MCF 10A (cell line): ENCODE measurements at regions of chr4 and their contacts with region 1.

Region 1: GRCh38 chr4:53702334-53703266 is 111.3 kb upstream of the LNX1 start:
- DNase-seq: peak; percentile 92
- H3K4me3 Mint-ChIP-seq: peak overlapping the region; percentile 56
- H3K27ac Mint-ChIP-seq: peak overlapping the region; percentile 80
- H3K4me1 Mint-ChIP-seq: peaks cover 18% of the 10 kb centered on the region
- H3K27me3 Mint-ChIP-seq: no peaks in the 10 kb centered on the region
- CTCF ChIP-seq: no peak

Region 2: DNA sequence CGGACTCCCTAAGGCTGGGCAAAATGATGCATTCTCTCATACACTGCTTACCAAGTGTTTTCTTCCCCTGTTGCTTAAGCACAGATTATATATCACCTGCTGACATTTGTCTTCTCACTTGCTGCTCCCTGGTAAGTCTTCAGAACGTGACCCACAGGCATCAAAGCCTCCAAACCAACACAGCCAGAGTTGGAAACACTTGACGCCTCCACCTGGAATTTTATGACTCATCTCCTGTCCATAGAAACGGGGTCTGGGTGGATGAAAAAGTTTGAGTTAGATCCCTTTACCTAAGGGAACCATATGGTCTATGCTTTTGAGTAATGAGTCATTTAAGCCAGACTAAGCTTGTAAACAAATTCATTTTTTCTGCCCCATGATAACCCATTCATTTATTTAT is 1295.1 kb before region 1 on chr4:
- CTCF ChIA-PET with region 1: no interaction called
- POLR2A ChIA-PET with region 1: no interaction called
- intact Hi-C with region 1: no loop called
- DNase-seq: peak; percentile 77
- H3K4me3 Mint-ChIP-seq: no peak overlapping the region
- H3K27ac Mint-ChIP-seq: no peak overlapping the region
- H3K4me1 Mint-ChIP-seq: no peaks in the 10 kb centered on the region
- H3K27me3 Mint-ChIP-seq: no peaks in the 10 kb centered on the region
- CTCF ChIP-seq: no peak

Region 3: DNA sequence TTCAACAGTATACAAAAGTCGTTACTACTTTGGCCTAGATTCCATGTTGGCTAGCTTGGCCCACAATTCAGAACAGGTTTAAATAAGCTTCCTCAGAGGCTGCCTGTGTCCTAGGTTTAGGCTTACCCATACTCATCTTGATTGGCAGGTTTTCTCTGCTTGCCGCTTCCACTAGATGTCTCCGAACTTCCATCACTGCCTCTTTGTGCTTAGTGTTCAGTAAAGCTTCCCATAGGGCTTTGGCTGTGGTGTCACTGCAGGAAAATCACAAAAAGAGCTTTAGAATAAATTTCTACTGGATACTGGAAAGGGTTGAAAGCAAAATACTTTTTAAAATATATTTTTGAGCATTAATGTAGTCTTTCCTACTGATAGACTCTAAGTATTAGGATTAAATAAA is 389.1 kb before region 1 on chr4:
- CTCF ChIA-PET with region 1: no interaction called
- POLR2A ChIA-PET with region 1: no interaction called
- intact Hi-C with region 1: loop called (anchors 2 kb)
- DNase-seq: peak; percentile 43
- H3K4me3 Mint-ChIP-seq: no peak overlapping the region
- H3K27ac Mint-ChIP-seq: no peak overlapping the region
- H3K4me1 Mint-ChIP-seq: peaks cover under 1% of the 10 kb centered on the region
- H3K27me3 Mint-ChIP-seq: no peaks in the 10 kb centered on the region
- CTCF ChIP-seq: no peak

Region 4: DNA sequence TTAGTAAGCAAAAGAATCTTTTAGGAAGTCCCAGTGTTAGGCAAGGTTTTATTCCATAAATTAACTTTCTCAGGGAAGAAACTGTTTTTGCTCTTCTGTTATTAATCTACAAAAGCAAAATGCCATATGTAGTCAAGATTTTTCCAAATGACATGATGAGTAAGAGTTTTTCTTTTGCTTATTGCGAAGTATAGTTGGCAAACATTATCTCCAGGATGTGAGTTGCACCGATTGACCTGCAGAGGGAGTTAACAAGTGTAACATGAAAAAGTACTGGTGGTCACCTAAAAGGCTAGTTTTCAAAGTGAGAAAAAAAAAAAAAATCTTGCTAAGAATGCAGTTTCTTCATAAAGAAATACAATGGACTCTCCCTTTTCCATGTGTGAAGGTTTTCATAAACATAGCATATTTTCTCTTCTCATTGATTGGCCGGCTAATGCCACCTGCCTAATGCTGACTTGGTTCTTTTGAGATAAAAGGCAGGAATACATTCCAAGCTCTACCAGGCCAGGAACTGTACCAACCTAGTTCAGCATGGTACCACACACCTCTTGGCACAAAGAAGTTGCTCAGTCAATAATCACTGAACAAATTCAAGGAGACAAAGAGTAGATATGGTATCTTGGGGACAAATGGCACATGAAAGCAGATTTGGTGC is 211.5 kb before region 1 on chr4:
- CTCF ChIA-PET with region 1: no interaction called
- POLR2A ChIA-PET with region 1: interaction called, 3 read pairs
- intact Hi-C with region 1: loop called (anchors 2 kb)
- DNase-seq: peak; percentile 85
- H3K4me3 Mint-ChIP-seq: no peak overlapping the region
- H3K27ac Mint-ChIP-seq: peak overlapping the region; percentile 83
- H3K4me1 Mint-ChIP-seq: no peaks in the 10 kb centered on the region
- H3K27me3 Mint-ChIP-seq: no peaks in the 10 kb centered on the region
- CTCF ChIP-seq: peak; percentile 39

Region 5: GRCh38 chr4:53717064-53717549 is 14.5 kb after region 1 on chr4:
- CTCF ChIA-PET with region 1: interaction called, 11 read pairs
- POLR2A ChIA-PET with region 1: no interaction called
- intact Hi-C with region 1: no loop called
- DNase-seq: no peak
- H3K4me3 Mint-ChIP-seq: no peak overlapping the region
- H3K27ac Mint-ChIP-seq: no peak overlapping the region
- H3K4me1 Mint-ChIP-seq: peaks cover 5% of the 10 kb centered on the region
- H3K27me3 Mint-ChIP-seq: no peaks in the 10 kb centered on the region
- CTCF ChIP-seq: no peak

Region 6: DNA sequence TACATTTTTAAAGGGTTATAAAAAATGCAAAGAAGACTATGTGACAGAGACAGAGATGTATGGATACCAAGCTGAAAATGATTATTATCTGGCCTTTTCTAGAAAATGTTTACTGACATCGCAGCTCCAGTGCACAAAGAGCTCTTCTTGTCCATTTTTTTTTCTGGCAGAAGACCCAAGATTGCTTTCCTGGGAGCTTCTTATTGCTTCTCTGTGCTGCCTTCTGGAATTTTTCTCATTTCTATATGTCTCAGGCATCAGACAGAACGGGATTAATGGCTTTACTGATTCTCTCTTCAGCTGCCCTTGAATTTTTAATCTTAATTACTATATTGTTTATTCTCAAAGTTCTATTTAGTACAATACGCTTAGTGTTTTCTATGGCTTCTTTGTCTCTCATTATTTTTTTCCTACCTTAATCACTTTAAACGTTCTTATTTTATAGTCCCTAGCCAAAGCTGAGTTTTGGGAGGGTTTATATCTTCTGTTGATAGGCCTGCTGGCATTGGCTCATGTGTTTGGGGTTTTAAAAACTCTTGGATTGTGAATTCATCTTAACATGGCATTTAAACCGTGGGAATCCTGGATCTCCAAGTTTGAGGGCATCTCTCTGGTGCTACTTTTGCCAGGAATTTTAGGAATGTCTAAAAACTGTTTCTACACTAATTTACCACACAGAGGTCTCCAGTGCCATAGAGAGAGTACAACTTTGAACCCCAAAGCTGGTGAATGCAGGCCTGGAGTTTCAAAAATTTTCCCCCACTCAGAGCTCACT is 27.6 kb after region 1 on chr4:
- CTCF ChIA-PET with region 1: interaction called, 10 read pairs
- POLR2A ChIA-PET with region 1: no interaction called
- intact Hi-C with region 1: no loop called
- DNase-seq: no peak
- H3K4me3 Mint-ChIP-seq: no peak overlapping the region
- H3K27ac Mint-ChIP-seq: no peak overlapping the region
- H3K4me1 Mint-ChIP-seq: peaks cover 8% of the 10 kb centered on the region
- H3K27me3 Mint-ChIP-seq: no peaks in the 10 kb centered on the region
- CTCF ChIP-seq: no peak

Region 7: GRCh38 chr4:53804719-53805118 is 102.1 kb after region 1 on chr4:
- CTCF ChIA-PET with region 1: interaction called, 3 read pairs
- POLR2A ChIA-PET with region 1: no interaction called
- intact Hi-C with region 1: loop called (anchors 2 kb)
- DNase-seq: peak; percentile 55
- H3K4me3 Mint-ChIP-seq: no peak overlapping the region
- H3K27ac Mint-ChIP-seq: no peak overlapping the region
- H3K4me1 Mint-ChIP-seq: no peaks in the 10 kb centered on the region
- H3K27me3 Mint-ChIP-seq: no peaks in the 10 kb centered on the region
- CTCF ChIP-seq: peak; percentile 43

Region 8: DNA sequence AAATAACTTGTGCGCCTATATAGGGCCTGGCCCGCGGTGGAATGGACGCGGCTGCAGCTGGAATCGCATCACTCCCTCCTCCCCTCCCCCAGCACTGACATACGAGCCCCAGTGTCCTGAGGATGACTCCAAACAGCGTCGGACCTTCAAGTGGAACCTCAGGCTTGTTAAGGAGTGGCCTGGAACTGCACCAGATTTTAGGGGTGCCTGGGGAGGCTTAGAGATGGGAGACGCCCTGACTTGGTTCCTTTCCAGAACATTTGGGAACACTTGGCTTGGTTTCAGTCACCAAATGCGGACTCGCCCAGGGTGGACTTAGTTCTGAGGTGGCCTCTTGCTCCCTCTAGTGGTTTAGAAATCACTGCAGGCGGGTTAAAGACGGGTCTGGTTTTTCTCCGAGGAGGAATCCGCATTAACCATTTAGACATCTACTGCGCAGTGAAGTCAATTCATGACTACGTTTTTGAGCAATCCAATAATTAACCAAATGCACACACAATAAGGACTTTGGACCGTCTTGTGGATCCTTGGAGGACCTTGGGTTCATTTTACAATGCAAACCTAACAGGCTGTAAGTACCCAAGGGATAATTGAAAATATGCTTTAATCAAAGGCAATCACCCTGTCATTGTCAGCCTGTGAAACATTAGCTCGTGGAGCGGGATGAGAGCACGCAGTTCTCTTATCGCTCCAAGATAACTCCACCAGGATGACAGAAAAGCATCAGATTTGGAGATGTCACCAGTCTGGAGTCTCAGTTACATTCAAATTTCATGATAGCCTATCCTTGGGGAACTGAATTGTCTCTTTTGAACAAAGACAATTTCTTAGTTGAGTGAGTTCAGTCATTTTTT is 515.3 kb after region 1 on chr4:
- CTCF ChIA-PET with region 1: interaction called, 5 read pairs
- POLR2A ChIA-PET with region 1: no interaction called
- intact Hi-C with region 1: loop called (anchors 5 kb)
- DNase-seq: peak; percentile 91
- H3K4me3 Mint-ChIP-seq: peak overlapping the region; percentile 40
- H3K27ac Mint-ChIP-seq: no peak overlapping the region
- H3K4me1 Mint-ChIP-seq: peaks cover 14% of the 10 kb centered on the region
- H3K27me3 Mint-ChIP-seq: no peaks in the 10 kb centered on the region
- CTCF ChIP-seq: peak; percentile 77